OCI-LY7 (cell line): ENCODE measurements at regions of chr6 and their contacts with region 1.

Region 1: DNA sequence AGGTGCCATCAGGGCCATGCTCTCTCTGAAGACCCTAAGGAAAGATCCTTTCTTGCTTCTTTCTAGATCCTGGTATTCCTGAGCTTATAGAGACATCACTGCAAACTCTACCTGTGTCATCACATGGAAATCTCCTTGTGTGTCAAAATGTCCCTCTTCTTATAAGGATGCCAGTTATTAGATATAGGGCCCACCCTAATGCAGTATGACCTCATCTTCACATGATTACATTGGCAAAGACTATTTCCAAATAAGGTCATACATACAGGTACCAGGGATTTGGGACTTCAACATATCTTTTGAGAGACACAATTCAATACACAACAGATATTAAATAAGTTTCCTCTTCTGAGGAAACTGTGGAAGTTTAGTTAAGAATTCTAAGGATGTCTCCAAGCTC is 123.8 kb downstream of the UNC5CL start:
- DNase-seq: no peak
- H3K4me3 ChIP-seq: no peak overlapping the region
- H3K27ac ChIP-seq: no peak overlapping the region
- H3K4me1 ChIP-seq: no peaks in the 10 kb centered on the region
- CTCF ChIP-seq: no peak

Region 2: GRCh38 chr6:40896696-40897095 is 18.5 kb before region 1 on chr6:
- CTCF ChIA-PET with region 1: no interaction called
- POLR2A ChIA-PET with region 1: interaction called, 5 read pairs
- intact Hi-C with region 1: loop called (anchors 1 kb)
- DNase-seq: no peak
- H3K4me3 ChIP-seq: no peak overlapping the region
- H3K27ac ChIP-seq: no peak overlapping the region
- H3K4me1 ChIP-seq: no peaks in the 10 kb centered on the region
- CTCF ChIP-seq: no peak

Region 3: GRCh38 chr6:40930555-40930954 is 15.4 kb after region 1 on chr6:
- CTCF ChIA-PET with region 1: no interaction called
- POLR2A ChIA-PET with region 1: no interaction called
- intact Hi-C with region 1: no loop called
- DNase-seq: no peak
- H3K4me3 ChIP-seq: no peak overlapping the region
- H3K27ac ChIP-seq: no peak overlapping the region
- H3K4me1 ChIP-seq: no peaks in the 10 kb centered on the region
- CTCF ChIP-seq: no peak